ENCODE measurements at regions of chr5 and their contacts with region 1.

Region 1: GRCh38 chr5:14463629-14464028 is 118.0 kb upstream of the OTULINL start:
- DNase-seq: no peak
- ATAC-seq: peak in 3 of 4 donors; percentile 57 to 78 (median 71)
- H3K4me3 ChIP-seq: no peak overlapping the region
- H3K27ac ChIP-seq: peak overlapping the region in 1 of 12 donors; percentile 38
- H3K4me1 ChIP-seq: peaks cover 0 to 17% (median under 1%) of the 10 kb centered on the region in 12 donors
- H3K27me3 ChIP-seq: no peaks in the 10 kb centered on the region
- CTCF ChIP-seq: no peak
- POLR2A ChIP-seq: no peak

Region 2: GRCh38 chr5:14399054-14399692 is 64.5 kb before region 1 on chr5:
- intact Hi-C with region 1: loop called in 2 of 10 experiments (anchors 5 to 10 kb)
- DNase-seq: no peak
- ATAC-seq: peak in 2 of 4 donors; percentile 50
- H3K4me3 ChIP-seq: no peak overlapping the region
- H3K27ac ChIP-seq: peak overlapping the region in 2 of 12 donors; percentile 11 to 28
- H3K4me1 ChIP-seq: peaks cover 0 to 29% (median 8%) of the 10 kb centered on the region in 12 donors
- H3K27me3 ChIP-seq: no peaks in the 10 kb centered on the region
- CTCF ChIP-seq: peak; percentile 52 to 85 (median 75)
- POLR2A ChIP-seq: no peak

Region 3: GRCh38 chr5:14405267-14405666 is 58.4 kb before region 1 on chr5:
- intact Hi-C with region 1: loop called in 1 of 10 experiments (anchors 10 kb)
- DNase-seq: no peak
- ATAC-seq: no peak
- H3K4me3 ChIP-seq: no peak overlapping the region
- H3K27ac ChIP-seq: peak overlapping the region in 2 of 12 donors; percentile 11 to 32
- H3K4me1 ChIP-seq: peaks cover 0 to 48% (median 22%) of the 10 kb centered on the region in 12 donors
- H3K27me3 ChIP-seq: no peaks in the 10 kb centered on the region
- CTCF ChIP-seq: peak in 3 of 12 donors; percentile 23 to 31 (median 27)
- POLR2A ChIP-seq: no peak

Region 4: GRCh38 chr5:14531668-14532067 is 68.0 kb after region 1 on chr5:
- intact Hi-C with region 1: no loop called
- DNase-seq: no peak
- ATAC-seq: no peak
- H3K4me3 ChIP-seq: no peak overlapping the region
- H3K27ac ChIP-seq: no peak overlapping the region
- H3K4me1 ChIP-seq: peaks cover 0 to 8% (median 0%) of the 10 kb centered on the region in 12 donors
- H3K27me3 ChIP-seq: no peaks in the 10 kb centered on the region
- CTCF ChIP-seq: no peak
- POLR2A ChIP-seq: no peak